ENCODE measurements at regions of chr9 and their contacts with region 1.

Region 1: DNA sequence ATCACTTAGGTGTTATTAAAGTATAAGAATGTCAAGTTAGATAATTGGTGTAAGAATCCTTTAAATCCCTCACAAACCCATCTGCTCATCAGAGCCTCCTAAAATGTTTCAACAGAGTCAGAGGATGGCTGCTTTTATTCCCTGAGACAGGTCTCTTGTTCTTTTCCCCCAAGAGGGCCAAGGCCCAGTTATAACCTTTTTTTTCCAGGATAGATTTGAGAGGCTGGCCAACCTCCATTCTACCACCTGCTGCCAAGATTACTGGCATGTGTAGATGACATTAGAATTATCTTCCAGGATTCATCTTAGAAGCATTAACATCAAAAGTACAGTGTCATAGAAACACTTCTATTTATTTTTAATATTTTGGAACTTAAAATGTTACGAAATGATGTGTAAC is 305.1 kb downstream of the TRPM3 start:
- DNase-seq: no peak
- H3K4me3 ChIP-seq: no peak overlapping the region
- H3K4me3 Mint-ChIP-seq: no peak overlapping the region
- H3K27ac Mint-ChIP-seq: no peak overlapping the region
- H3K4me1 ChIP-seq: no peaks in the 10 kb centered on the region
- H3K4me1 Mint-ChIP-seq: no peaks in the 10 kb centered on the region
- H3K27me3 ChIP-seq: no peaks in the 10 kb centered on the region
- H3K27me3 Mint-ChIP-seq: no peaks in the 10 kb centered on the region
- CTCF ChIP-seq: no peak

Region 2: GRCh38 chr9:70835323-70835722 is 19.0 kb after region 1 on chr9:
- CTCF ChIA-PET with region 1: no interaction called
- POLR2A ChIA-PET with region 1: no interaction called
- intact Hi-C with region 1: no loop called
- DNase-seq: no peak
- H3K4me3 ChIP-seq: no peak overlapping the region
- H3K4me3 Mint-ChIP-seq: no peak overlapping the region
- H3K27ac Mint-ChIP-seq: no peak overlapping the region
- H3K4me1 ChIP-seq: no peaks in the 10 kb centered on the region
- H3K4me1 Mint-ChIP-seq: no peaks in the 10 kb centered on the region
- H3K27me3 ChIP-seq: no peaks in the 10 kb centered on the region
- H3K27me3 Mint-ChIP-seq: peaks cover 1% of the 10 kb centered on the region
- CTCF ChIP-seq: no peak

Region 3: GRCh38 chr9:70868661-70869652 is 52.6 kb after region 1 on chr9:
- CTCF ChIA-PET with region 1: no interaction called
- POLR2A ChIA-PET with region 1: no interaction called
- intact Hi-C with region 1: loop called (anchors 5 kb)
- DNase-seq: no peak
- H3K4me3 ChIP-seq: no peak overlapping the region
- H3K4me3 Mint-ChIP-seq: no peak overlapping the region
- H3K27ac Mint-ChIP-seq: no peak overlapping the region
- H3K4me1 ChIP-seq: no peaks in the 10 kb centered on the region
- H3K4me1 Mint-ChIP-seq: no peaks in the 10 kb centered on the region
- H3K27me3 ChIP-seq: no peaks in the 10 kb centered on the region
- H3K27me3 Mint-ChIP-seq: peaks cover 2% of the 10 kb centered on the region
- CTCF ChIP-seq: no peak

Measured in Caco-2 (cell line).